K562 (cell line): ENCODE measurements at regions of chr5 and their contacts with region 1.

Region 1: GRCh38 chr5:6435356-6435755 is 13.3 kb upstream of the UBE2QL1 start:
- DNase-seq: peak; percentile 29 to 55 (median 36)
- ATAC-seq: peak; percentile 89
- H3K4me3 ChIP-seq: no peak overlapping the region
- H3K27ac ChIP-seq: no peak overlapping the region
- H3K4me1 ChIP-seq: no peaks in the 10 kb centered on the region
- H3K27me3 ChIP-seq: peaks cover 15 to 27% of the 10 kb centered on the region in 2 experiments
- CTCF ChIP-seq: peak; percentile 60 to 70 (median 65)
- EP300 ChIP-seq: no peak
- POLR2A ChIP-seq: no peak
- RAD21 ChIP-seq: peak; percentile 67 to 85

Region 2: GRCh38 chr5:6291961-6292360 is 143.4 kb before region 1 on chr5:
- CTCF ChIA-PET with region 1: no interaction called
- POLR2A ChIA-PET with region 1: no interaction called
- in situ Hi-C with region 1: no loop called
- intact Hi-C with region 1: loop called (anchors 5 kb)
- DNase-seq: peak in 1 of 4 experiments; percentile 27
- ATAC-seq: peak; percentile 80
- H3K4me3 ChIP-seq: no peak overlapping the region
- H3K27ac ChIP-seq: no peak overlapping the region
- H3K4me1 ChIP-seq: no peaks in the 10 kb centered on the region
- H3K27me3 ChIP-seq: no peaks in the 10 kb centered on the region
- CTCF ChIP-seq: peak in 2 of 3 experiments; percentile 33 to 61; a peak in 4 of 6 replicates
- EP300 ChIP-seq: no peak
- POLR2A ChIP-seq: no peak
- RAD21 ChIP-seq: peak; percentile 62 to 73

Region 3: DNA sequence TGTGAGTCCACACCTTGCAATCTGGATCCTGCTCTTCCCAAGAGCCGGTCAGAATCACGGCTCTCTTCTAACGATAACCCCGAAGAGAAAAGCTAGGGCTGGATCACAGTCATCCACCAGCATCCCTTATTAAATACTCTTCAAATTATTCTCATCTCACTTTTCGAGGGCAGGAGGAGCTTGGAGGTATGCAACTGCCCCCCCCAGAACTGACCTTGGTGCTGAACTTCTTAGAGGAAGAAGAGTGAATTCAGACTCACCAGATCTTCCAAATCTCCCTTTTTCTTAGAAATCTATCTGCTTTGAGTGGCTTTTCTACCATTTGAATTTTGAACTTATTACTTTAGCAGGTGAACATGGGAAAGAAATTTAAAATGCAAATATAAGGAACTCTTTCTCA is 132.7 kb before region 1 on chr5:
- CTCF ChIA-PET with region 1: no interaction called
- POLR2A ChIA-PET with region 1: no interaction called
- in situ Hi-C with region 1: no loop called
- intact Hi-C with region 1: no loop called
- DNase-seq: peak in 1 of 4 experiments; percentile 24
- ATAC-seq: no peak
- H3K4me3 ChIP-seq: no peak overlapping the region
- H3K27ac ChIP-seq: no peak overlapping the region
- H3K4me1 ChIP-seq: no peaks in the 10 kb centered on the region
- H3K27me3 ChIP-seq: no peaks in the 10 kb centered on the region; a peak in 1 of 5 replicates
- CTCF ChIP-seq: no peak
- EP300 ChIP-seq: no peak
- POLR2A ChIP-seq: no peak
- RAD21 ChIP-seq: no peak